ENCODE measurements at regions of chr12 and their contacts with region 1.

Region 1: DNA sequence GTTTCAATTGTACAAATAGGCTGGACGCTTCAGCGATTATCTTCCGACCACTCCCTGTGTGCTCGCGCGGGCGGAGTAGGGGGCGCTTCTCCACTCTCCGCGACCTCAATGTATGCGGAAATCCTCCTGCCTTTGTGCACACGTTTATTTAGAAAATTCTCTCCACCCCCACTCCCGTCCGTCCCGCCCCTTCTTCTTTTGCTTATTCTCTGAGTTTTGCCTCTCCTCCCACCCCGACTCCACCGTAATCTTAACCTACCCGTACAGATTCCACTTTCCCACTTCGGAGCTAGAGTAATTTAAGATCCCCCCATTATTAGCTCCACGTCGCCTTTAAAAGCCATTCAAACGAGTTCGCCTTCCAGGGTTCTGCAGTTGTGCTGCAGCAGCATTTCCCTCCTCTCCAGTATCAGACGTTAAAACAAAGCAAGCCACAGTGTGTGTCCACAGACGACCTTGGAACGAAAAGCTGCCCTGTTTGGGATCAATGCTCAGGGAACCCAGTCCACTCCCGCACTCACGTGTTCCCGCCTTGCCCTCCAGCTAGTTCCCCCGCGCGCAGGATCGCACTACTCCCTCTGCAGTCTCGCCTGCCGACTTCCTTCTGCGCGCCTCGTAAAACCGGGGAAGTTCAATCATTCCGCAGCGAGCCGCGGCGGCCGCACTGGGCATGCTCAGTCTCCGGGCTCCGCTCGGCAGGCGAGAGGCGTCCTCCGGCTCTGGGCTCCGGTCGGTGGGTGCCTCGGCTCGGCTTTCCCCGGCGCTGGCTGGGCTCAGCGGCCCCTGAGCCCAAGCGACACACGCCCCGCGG is at the start of gene ANO6:
- DNase-seq: peak; percentile 82
- CTCF ChIP-seq: peak; percentile 39

Region 2: DNA sequence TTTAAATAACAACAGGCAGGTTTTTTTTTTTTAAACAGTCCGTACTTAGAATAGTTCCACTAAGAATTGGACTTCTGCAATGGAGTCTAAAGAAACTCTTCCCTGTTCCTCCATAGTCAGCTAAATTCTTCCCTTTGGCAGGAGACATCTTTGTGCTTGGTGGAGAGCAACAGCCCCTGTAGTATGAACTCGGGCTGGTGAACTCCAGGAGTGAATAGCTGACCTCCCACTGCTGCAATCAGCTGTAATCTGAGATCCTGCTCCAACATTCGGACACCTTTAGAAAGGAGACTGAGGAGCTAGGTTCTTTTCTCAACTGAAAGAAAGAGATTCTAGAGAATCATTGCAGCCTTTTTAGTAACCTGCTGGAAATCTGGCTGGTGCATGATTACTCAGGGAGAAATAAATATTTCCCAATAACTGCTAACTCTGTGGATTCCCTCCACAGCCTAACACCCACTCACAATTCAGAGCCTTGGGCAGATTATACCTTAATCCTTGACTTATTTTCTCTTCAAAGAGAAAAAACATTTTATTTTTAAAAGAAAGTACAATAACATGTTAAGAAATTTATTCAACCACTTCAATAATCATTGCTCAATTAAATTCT is 139.1 kb before region 1 on chr12:
- CTCF ChIA-PET with region 1: no interaction called
- POLR2A ChIA-PET with region 1: no interaction called
- DNase-seq: no peak
- CTCF ChIP-seq: no peak

Region 3: GRCh38 chr12:45200491-45201043 is 15.1 kb before region 1 on chr12:
- CTCF ChIA-PET with region 1: interaction called, 12 read pairs
- POLR2A ChIA-PET with region 1: no interaction called
- DNase-seq: no peak
- CTCF ChIP-seq: no peak

Region 4: DNA sequence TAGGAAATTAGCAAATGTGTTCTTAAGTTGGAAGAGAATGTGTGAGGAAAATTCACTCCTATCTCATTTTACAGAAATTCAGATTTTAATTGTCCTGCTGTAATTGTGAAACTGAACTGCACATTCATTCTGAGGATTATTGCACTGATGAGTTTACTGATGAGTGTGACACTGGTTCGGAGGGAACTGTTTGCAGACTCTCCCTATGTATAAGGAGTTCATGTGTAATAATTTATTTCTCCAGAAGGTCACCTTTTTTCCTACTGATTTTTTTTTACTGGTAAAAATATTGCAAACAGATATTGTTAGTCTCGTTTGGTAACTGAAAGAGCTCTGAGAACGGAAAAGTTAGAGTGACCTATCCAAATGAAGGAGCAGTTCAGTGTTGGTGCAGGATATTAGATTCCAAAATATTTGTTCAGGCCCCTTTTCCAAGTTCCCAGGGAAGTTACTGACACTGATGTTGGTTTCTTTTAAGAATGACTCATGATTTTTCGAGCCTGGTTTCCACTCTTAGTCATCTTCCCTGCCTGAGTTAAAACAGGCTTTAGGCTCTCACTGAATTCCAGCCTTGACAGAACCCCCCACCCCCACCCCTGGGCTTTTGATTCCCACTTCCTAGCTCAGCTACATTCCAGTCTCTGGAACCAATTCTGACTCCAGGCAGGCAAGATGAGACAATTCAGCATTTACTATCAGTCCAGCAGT is 18.7 kb after region 1 on chr12:
- CTCF ChIA-PET with region 1: interaction called, 11 read pairs
- POLR2A ChIA-PET with region 1: interaction called, 5 read pairs
- DNase-seq: no peak
- CTCF ChIP-seq: no peak